ENCODE measurements at regions of chr6 and their contacts with region 1.

Region 1: GRCh38 chr6:148611234-148611633 is 135.6 kb upstream of the UST start:
- DNase-seq: peak; percentile 92
- H3K4me3 ChIP-seq: no peak overlapping the region
- H3K27ac ChIP-seq: peak overlapping the region; percentile 50 to 63 (median 60)
- H3K4me1 ChIP-seq: peaks cover 0 to 40% (median 29%) of the 10 kb centered on the region in 4 donors
- H3K27me3 ChIP-seq: no peaks in the 10 kb centered on the region
- CTCF ChIP-seq: no peak
- EP300 ChIP-seq: peak in 3 of 4 donors; percentile 0 to 47 (median 38)
- POLR2A ChIP-seq: no peak

Region 2: GRCh38 chr6:148479497-148479896 is 131.7 kb before region 1 on chr6:
- intact Hi-C with region 1: no loop called
- DNase-seq: no peak
- H3K4me3 ChIP-seq: no peak overlapping the region
- H3K27ac ChIP-seq: no peak overlapping the region
- H3K4me1 ChIP-seq: no peaks in the 10 kb centered on the region
- H3K27me3 ChIP-seq: no peaks in the 10 kb centered on the region
- CTCF ChIP-seq: no peak
- EP300 ChIP-seq: no peak
- POLR2A ChIP-seq: no peak

Region 3: GRCh38 chr6:148596891-148597455 is 14.3 kb before region 1 on chr6:
- intact Hi-C with region 1: loop called (anchors 2 kb)
- DNase-seq: no peak
- H3K4me3 ChIP-seq: no peak overlapping the region
- H3K27ac ChIP-seq: peak overlapping the region in 3 of 4 donors; percentile 3 to 72 (median 71)
- H3K4me1 ChIP-seq: peaks cover 0 to 70% (median 44%) of the 10 kb centered on the region in 4 donors
- H3K27me3 ChIP-seq: no peaks in the 10 kb centered on the region
- CTCF ChIP-seq: no peak
- EP300 ChIP-seq: no peak
- POLR2A ChIP-seq: no peak

Region 4: DNA sequence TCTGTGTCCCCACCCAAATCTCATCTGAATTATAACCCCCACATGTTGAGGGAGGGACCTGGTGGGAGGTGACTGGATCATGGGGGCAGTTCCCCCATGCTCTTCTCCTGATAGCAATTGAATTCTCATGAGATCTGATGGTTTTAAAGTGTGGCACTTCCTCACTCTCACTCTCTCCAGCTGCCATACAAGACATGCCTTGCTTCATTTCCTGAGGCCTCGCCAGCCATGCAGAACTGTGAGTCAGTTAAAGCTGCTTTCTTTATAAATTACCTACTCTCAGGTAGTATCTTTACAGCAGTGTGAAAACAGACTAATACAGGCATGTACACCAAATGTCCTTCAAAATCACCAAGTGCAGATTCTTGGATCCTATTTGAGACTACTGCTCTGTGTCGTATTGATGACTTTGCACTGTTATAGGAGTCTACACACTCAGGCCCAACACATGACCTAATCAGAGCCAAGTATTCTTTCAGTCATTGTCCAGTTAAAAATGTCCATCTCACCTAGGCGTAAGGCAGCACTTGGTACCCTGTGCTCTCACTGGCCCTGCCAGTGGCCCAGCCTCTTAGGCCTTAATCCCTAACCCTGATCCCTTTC is 82.7 kb after region 1 on chr6:
- intact Hi-C with region 1: no loop called
- DNase-seq: no peak
- H3K4me3 ChIP-seq: no peak overlapping the region
- H3K27ac ChIP-seq: no peak overlapping the region
- H3K4me1 ChIP-seq: peaks cover 0 to 1% (median 0%) of the 10 kb centered on the region in 4 donors
- H3K27me3 ChIP-seq: no peaks in the 10 kb centered on the region
- CTCF ChIP-seq: no peak
- EP300 ChIP-seq: no peak
- POLR2A ChIP-seq: no peak

Region 5: DNA sequence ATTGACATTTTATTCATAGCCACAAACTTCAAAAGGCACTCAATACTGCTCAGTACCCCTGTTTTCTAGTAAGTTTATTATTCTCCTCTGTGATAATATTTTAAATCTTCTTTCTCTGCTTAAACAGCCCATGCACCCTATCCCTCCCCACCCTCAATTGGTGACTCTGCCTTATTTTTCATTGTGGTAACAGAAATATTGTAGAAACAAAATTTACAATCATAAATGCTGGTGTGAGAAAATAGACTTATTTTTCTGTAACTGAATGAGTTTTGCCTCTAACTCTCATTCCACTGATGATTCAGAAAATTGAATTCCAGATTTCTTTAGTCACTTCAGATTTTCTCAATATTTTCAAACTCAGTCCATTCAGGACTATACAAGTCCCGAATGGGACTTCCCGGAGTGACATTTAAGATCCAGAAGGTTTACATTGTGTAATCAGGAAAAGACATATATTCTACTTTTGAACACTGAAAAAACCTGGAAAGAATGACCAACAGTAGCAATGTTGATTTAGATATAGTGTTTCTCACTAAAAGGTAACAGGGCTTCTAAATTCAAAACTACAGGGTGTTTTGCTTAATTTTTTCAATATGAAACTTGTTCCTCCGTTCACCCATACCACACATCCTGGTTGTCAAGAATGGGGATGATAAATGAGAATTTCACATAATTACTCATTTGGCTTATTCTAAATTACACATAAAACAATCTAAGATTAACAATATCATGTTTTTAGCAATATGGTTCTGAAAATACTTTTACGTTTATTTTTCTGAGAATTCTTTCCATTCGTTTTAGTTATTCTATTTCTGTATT is 100.8 kb after region 1 on chr6:
- intact Hi-C with region 1: no loop called
- DNase-seq: no peak
- H3K4me3 ChIP-seq: no peak overlapping the region
- H3K27ac ChIP-seq: no peak overlapping the region
- H3K4me1 ChIP-seq: peaks cover 0 to 15% (median 6%) of the 10 kb centered on the region in 4 donors
- H3K27me3 ChIP-seq: no peaks in the 10 kb centered on the region
- CTCF ChIP-seq: no peak
- EP300 ChIP-seq: no peak
- POLR2A ChIP-seq: no peak

Region 6: GRCh38 chr6:149147938-149148718 is 536.9 kb after region 1 on chr6:
- intact Hi-C with region 1: no loop called
- DNase-seq: no peak
- H3K4me3 ChIP-seq: no peak overlapping the region
- H3K27ac ChIP-seq: no peak overlapping the region
- H3K4me1 ChIP-seq: peaks cover 0 to 7% (median 0%) of the 10 kb centered on the region in 4 donors
- H3K27me3 ChIP-seq: no peaks in the 10 kb centered on the region
- CTCF ChIP-seq: peak in 1 of 4 experiments; percentile 7
- EP300 ChIP-seq: no peak
- POLR2A ChIP-seq: no peak

Measured in sigmoid colon (tissue), 7 donors.